Activated CD4-positive, alpha-beta T cell treated with anti-CD3 and anti-CD28 coated beads, Interleukin-2, amount 10 ng/mL, durations not matched to agents 24 days and 14 days (primary cell): ENCODE measurements at regions of chr6 and their contacts with region 1.

Region 1: DNA sequence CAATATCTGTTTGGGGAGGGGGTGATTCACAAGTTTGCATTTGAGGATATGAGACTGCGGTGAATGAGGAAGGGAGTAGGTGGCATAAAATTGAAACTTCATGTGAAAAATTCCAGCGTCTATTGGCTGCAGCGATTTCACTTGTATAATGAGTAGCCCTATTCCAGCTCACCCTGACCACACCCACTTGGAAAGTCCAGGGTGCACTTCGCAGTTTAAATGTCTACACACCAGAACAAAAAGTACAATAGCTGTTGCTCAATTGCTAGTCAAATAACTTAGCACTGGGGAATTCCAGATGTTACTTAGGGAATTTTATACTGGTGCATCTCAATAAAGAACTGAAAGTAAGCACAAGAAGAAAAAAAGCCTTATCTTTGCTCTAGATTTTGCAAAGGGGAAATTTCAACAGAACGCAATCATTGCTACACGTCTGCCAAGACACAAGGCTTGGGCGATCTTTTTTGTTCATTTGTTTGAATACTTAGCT is 6.3 kb downstream of the TNFAIP3 start:
- DNase-seq: peak; percentile 89
- H3K4me3 Mint-ChIP-seq: peak overlapping the region; percentile 87
- H3K27ac Mint-ChIP-seq: peak overlapping the region; percentile 86
- H3K4me1 Mint-ChIP-seq: peaks cover 44% of the 10 kb centered on the region
- H3K27me3 Mint-ChIP-seq: no peaks in the 10 kb centered on the region

Region 2: DNA sequence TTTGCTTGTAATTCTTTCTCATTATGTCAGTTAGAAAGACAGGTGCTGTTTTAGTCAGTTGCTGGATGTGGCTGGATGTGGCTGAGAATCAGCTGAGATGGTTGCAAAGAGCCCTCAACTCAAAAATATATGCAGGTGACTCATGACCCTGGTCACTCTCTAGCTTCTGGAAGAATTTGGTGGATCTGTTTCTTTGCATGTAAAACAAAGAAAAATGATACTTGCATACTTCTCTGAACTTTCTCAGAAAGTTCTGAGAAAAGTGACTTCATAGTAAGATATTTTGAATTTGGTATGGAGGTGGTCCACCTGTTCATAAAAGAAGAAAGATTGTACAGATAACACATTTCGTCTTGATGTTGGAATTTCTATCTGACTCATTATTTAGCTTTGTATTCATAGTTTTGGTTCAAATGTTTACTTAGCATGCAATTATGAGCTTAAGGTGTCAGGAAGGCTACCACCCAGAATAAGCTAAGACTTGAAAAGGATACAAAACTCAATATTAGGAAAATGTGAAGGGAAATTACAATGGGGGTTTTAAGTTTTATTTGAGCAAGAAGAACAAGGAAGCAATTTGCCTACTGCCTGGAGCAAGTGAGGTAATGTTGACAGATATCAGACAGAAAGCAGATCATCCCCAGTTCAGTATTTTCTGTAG is 215.8 kb before region 1 on chr6:
- intact Hi-C with region 1: loop called (anchors 1 kb)
- DNase-seq: peak; percentile 79
- H3K4me3 Mint-ChIP-seq: peak overlapping the region; percentile 4
- H3K27ac Mint-ChIP-seq: peak overlapping the region; percentile 45
- H3K4me1 Mint-ChIP-seq: peaks cover 29% of the 10 kb centered on the region
- H3K27me3 Mint-ChIP-seq: no peaks in the 10 kb centered on the region

Region 3: DNA sequence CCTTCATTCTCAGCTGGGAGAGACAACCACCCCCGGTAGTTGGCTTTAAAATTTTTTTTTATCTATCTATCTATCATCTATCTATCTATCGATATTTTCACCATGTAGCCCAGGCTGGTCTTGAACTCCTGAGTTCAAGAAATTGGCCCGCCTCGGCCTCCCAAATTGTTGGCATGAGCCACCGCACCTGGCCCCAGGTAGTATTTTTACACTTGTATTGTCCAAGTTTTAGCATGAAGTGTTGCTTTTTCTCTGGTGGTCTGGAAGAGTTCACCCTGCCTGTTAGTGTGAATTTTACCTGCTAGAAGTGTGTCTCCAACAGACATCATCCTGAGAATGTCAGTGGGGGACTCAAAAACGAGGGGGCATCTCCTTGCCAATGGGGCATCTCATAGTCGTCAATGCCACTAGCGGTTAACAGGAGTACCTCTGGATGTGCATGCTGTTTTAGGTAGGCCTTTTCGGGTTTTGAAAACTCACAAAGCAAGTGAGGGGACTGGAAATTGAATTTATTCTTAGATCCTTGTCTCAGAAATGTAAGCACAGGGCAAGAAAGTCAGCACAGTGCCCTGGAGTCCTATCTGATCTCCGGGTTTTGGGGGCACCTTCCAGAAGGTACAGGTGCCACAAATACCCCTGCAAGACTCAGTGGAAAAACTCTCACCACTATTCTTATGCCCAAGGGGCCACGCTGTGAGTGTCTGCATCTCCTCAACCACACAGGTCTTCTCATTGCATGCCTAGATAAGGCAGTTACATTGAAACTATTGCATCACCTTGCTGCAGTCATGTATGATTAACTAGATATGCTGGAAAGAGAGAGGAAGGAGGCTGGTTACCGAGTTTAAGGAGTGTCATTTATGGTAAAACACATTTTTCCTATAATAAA is 30.9 kb after region 1 on chr6:
- intact Hi-C with region 1: loop called (anchors 1 kb)
- DNase-seq: peak; percentile 81
- H3K4me3 Mint-ChIP-seq: peak overlapping the region; percentile 75
- H3K27ac Mint-ChIP-seq: peak overlapping the region; percentile 99
- H3K4me1 Mint-ChIP-seq: peaks cover 50% of the 10 kb centered on the region
- H3K27me3 Mint-ChIP-seq: no peaks in the 10 kb centered on the region

Region 4: GRCh38 chr6:137944793-137945498 is 71.6 kb after region 1 on chr6:
- intact Hi-C with region 1: loop called (anchors 1 kb)
- DNase-seq: peak; percentile 77
- H3K4me3 Mint-ChIP-seq: peak overlapping the region; percentile 23
- H3K27ac Mint-ChIP-seq: peak overlapping the region; percentile 81
- H3K4me1 Mint-ChIP-seq: peaks cover 57% of the 10 kb centered on the region
- H3K27me3 Mint-ChIP-seq: no peaks in the 10 kb centered on the region